Naive thymus-derived CD4-positive, alpha-beta T cell (primary cell): ENCODE measurements at regions of chr1 and their contacts with region 1.

Region 1: GRCh38 chr1:46724991-46725735 is 6.2 kb upstream of the EFCAB14 start:
- DNase-seq: peak; percentile 35 to 79 (median 69)
- ATAC-seq: peak; percentile 99
- H3K4me3 ChIP-seq: no peak overlapping the region
- H3K4me3 Mint-ChIP-seq: no peak overlapping the region
- H3K27ac ChIP-seq: no peak overlapping the region
- H3K27ac Mint-ChIP-seq: no peak overlapping the region
- H3K4me1 ChIP-seq: no peaks in the 10 kb centered on the region
- H3K4me1 Mint-ChIP-seq: peaks cover 0 to 4% (median 0%) of the 10 kb centered on the region in 7 donors
- H3K27me3 ChIP-seq: no peaks in the 10 kb centered on the region
- H3K27me3 Mint-ChIP-seq: peaks cover 30 to 42% (median 34%) of the 10 kb centered on the region in 5 donors

Region 2: DNA sequence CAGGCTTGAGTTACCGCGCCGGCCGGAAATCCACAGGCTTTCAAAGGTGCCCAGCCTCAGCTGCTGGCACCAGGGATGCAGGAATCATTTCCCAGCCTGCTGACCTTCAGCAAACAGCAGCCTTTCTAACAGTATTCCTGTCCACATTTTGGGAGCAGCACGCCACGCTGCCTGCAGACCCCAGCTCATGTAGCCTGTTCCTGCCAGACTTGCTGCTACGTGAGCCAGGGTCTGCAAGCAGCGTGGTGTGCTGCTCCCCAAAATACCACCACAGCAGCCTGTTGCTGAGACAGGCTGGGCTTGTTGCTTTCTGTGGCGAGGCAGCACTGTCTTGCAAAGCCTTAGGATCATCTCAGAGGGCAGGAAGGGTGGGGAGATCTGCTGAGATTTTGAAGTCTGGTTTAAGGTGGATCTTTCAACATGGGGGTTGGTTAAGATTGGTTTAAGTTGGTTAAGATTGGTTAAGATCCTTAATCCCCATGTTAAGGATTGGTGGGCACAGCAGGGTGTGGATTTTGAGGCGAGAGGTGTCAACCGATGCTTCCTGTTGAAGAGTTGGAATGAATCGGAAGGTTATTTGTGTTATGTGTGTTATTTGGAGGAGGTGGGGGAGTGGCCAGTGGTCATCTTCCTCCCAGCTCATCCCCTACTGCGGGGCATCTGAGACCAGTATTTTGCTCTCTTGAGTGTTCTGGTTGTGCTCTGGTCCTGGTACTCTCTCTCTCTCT is 318.1 kb before region 1 on chr1:
- CTCF ChIA-PET with region 1: no interaction called
- POLR2A ChIA-PET with region 1: no interaction called
- intact Hi-C with region 1: loop called in 1 of 2 experiments (anchors 1 kb)
- DNase-seq: no peak
- ATAC-seq: no peak
- H3K4me3 ChIP-seq: no peak overlapping the region
- H3K4me3 Mint-ChIP-seq: peak overlapping the region in 2 of 10 donors; percentile 40 to 42
- H3K27ac ChIP-seq: no peak overlapping the region
- H3K27ac Mint-ChIP-seq: no peak overlapping the region
- H3K4me1 ChIP-seq: no peaks in the 10 kb centered on the region
- H3K4me1 Mint-ChIP-seq: peaks cover 0 to 7% (median 0%) of the 10 kb centered on the region in 7 donors
- H3K27me3 ChIP-seq: no peaks in the 10 kb centered on the region
- H3K27me3 Mint-ChIP-seq: no peaks in the 10 kb centered on the region

Region 3: DNA sequence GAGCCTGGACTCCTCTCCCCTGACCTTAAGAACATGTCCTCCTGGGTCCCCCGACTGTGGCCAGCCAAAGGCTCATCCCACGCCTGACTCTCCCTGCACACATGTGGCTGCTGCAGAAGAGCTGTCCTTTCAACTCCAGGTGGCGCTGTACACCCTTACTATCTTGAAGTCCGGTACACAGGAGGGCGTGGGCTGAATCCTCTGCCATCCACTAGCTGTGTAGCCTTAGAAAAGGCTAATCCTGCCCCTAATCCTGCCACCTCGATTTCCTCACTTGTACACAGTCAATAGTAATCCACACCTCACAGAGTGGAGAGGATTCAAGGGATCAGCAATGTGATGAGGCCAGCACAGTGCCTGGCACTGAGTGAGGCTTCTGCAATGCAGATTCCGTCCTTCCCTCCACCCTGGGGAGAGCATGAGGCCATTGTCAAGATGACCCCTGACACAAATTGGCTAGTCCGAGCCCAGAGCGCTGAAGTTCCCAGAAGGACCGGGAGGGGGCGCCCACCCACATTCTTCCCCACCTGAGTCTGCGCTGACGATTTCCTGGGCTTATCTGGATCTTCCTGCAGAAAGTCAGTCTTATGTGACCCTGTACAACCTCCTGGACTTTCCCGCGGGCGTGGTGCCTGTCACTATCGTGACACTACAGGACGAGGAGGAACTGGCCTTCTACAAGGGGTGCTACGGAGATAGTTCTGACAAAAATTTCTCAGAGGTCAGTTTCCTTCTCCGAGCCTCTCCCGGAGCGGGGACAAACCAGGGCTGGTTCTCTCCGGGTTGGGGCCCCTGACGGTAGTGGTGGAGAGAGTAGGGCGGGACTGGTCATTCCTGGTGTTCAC is 282.6 kb before region 1 on chr1:
- CTCF ChIA-PET with region 1: interaction called, 6 read pairs
- POLR2A ChIA-PET with region 1: no interaction called
- intact Hi-C with region 1: loop called (anchors 1 to 10 kb)
- DNase-seq: peak; percentile 39 to 75 (median 63)
- ATAC-seq: peak; percentile 79
- H3K4me3 ChIP-seq: peak overlapping the region; percentile 75
- H3K4me3 Mint-ChIP-seq: peak overlapping the region; percentile 77 to 95 (median 89)
- H3K27ac ChIP-seq: no peak overlapping the region
- H3K27ac Mint-ChIP-seq: peak overlapping the region in 1 of 9 donors; percentile 47
- H3K4me1 ChIP-seq: peaks cover 0 to 1% of the 10 kb centered on the region in 2 donors
- H3K4me1 Mint-ChIP-seq: peaks cover 13 to 20% (median 14%) of the 10 kb centered on the region in 7 donors
- H3K27me3 ChIP-seq: peaks cover 0 to 5% of the 10 kb centered on the region in 2 donors
- H3K27me3 Mint-ChIP-seq: peaks cover 8 to 45% (median 20%) of the 10 kb centered on the region in 5 donors

Region 4: GRCh38 chr1:46477153-46477929 is 247.8 kb before region 1 on chr1:
- CTCF ChIA-PET with region 1: interaction called, 3 read pairs
- POLR2A ChIA-PET with region 1: no interaction called
- intact Hi-C with region 1: loop called (anchors 1 kb)
- DNase-seq: peak; percentile 44 to 79 (median 60)
- ATAC-seq: peak; percentile 92
- H3K4me3 ChIP-seq: no peak overlapping the region
- H3K4me3 Mint-ChIP-seq: no peak overlapping the region
- H3K27ac ChIP-seq: no peak overlapping the region
- H3K27ac Mint-ChIP-seq: peak overlapping the region in 1 of 9 donors; percentile 55
- H3K4me1 ChIP-seq: no peaks in the 10 kb centered on the region
- H3K4me1 Mint-ChIP-seq: no peaks in the 10 kb centered on the region
- H3K27me3 ChIP-seq: no peaks in the 10 kb centered on the region
- H3K27me3 Mint-ChIP-seq: peaks cover 13 to 60% (median 28%) of the 10 kb centered on the region in 5 donors

Region 5: DNA sequence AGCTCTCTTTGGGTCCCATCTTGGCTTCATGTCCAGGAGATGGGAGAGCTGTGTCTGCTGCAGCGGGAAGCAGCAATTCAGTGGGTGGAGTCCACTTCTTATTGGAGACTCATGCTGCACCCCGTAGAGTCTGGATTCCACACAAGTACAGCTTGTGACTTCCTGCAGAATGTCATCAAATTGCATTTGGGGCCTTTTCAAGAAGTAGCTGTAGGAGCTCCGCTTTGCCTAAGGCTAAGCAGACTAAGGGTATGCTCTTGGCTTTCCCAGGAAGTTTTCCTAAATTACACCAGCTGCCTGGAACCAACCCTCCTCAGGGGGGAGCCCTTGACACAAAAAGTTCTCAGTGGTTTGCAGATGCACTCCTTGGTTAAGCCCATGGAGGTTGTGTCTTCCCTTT is 102.8 kb before region 1 on chr1:
- CTCF ChIA-PET with region 1: interaction called, 4 read pairs
- POLR2A ChIA-PET with region 1: no interaction called
- intact Hi-C with region 1: loop called in 1 of 2 experiments (anchors 1 kb)
- DNase-seq: no peak
- ATAC-seq: no peak
- H3K4me3 ChIP-seq: no peak overlapping the region
- H3K4me3 Mint-ChIP-seq: no peak overlapping the region
- H3K27ac ChIP-seq: no peak overlapping the region
- H3K27ac Mint-ChIP-seq: no peak overlapping the region
- H3K4me1 ChIP-seq: peaks cover 0 to under 1% of the 10 kb centered on the region in 2 donors
- H3K4me1 Mint-ChIP-seq: peaks cover 2 to 27% (median 5%) of the 10 kb centered on the region in 7 donors
- H3K27me3 ChIP-seq: no peaks in the 10 kb centered on the region
- H3K27me3 Mint-ChIP-seq: no peaks in the 10 kb centered on the region